GM12878 (cell line): ENCODE measurements at regions of chr2 and their contacts with region 1.

Region 1: DNA sequence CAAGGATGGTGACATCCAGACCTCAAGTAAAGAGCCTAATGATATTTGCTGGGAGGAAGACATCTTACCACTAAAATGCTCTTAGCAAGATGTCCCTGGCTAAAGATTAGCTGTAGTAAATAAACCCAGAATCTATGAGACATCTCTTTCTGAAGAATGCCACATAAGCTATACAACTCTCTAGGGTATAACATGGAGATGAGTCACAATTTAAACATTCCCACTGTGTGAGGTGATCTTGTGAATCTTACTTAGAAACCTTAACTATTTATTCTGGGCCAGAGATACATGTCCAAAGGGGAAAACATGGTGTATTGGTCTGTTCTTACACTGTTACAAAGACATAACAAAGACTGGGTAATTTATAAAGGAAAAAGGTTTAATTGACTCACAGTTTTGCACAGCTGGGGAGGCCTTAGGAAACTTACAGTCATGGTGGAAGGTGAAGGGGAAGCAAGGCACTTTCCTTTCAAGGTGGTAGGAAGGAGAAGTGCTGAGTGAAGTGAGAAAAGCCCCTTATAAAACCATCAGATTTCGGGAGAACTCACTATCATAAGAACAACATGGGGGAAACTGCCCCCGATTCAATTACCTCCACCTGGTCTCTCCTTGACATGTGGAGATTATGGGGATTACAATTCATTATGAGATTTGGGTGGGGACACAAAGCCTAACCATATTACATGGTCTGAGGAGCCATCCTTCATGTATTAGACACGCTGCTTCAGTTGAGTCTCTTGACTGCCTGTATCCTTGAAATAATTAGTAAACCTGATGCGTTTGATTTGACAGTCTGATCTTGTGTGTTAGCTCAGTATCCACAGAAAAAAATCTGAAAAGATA is 17.1 kb downstream of the KRCC1 start:
- DNase-seq: no peak
- ATAC-seq: no peak
- H3K4me3 ChIP-seq: no peak overlapping the region
- H3K27ac ChIP-seq: no peak overlapping the region
- H3K4me1 ChIP-seq: no peaks in the 10 kb centered on the region
- H3K27me3 ChIP-seq: no peaks in the 10 kb centered on the region
- CTCF ChIP-seq: no peak
- EP300 ChIP-seq: no peak
- POLR2A ChIP-seq: no peak
- RAD21 ChIP-seq: no peak

Region 2: DNA sequence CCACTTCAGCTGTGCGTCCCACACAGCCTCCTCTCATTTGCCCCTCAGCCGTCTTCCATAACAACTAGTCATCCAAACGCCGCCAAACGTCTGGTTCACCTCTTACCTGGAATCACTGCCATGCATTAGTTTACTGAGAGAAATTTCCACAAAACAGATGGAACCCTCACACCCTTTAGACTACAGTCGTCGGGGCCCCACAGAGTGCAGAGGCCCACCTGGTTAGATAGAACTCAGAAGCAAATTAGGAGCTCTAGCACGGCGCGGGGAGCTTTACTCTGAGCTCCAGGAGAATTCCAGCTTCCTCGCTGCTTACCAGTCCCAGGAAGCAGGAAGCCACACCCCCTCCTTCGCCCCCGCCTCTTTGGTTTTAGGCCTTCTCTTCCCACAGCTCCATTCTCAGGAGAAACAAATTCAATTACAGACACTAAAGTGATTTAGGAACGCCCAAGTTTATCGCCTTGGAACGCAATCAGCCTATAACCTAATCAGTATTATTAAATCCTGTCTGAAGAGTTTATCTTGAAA is 31.5 kb before region 1 on chr2:
- CTCF ChIA-PET with region 1: no interaction called
- POLR2A ChIA-PET with region 1: no interaction called
- RAD21 ChIA-PET with region 1: no interaction called
- SMC1A ChIA-PET with region 1: no interaction called
- in situ Hi-C with region 1: no loop called
- intact Hi-C with region 1: no loop called
- DNase-seq: no peak
- ATAC-seq: no peak
- H3K4me3 ChIP-seq: no peak overlapping the region
- H3K27ac ChIP-seq: no peak overlapping the region
- H3K4me1 ChIP-seq: no peaks in the 10 kb centered on the region
- H3K27me3 ChIP-seq: no peaks in the 10 kb centered on the region; a peak in 1 of 4 replicates
- CTCF ChIP-seq: no peak
- EP300 ChIP-seq: no peak
- POLR2A ChIP-seq: no peak
- RAD21 ChIP-seq: no peak

Region 3: GRCh38 chr2:88074854-88075292 is 36.4 kb after region 1 on chr2:
- CTCF ChIA-PET with region 1: no interaction called
- POLR2A ChIA-PET with region 1: no interaction called
- RAD21 ChIA-PET with region 1: no interaction called
- SMC1A ChIA-PET with region 1: no interaction called
- in situ Hi-C with region 1: no loop called
- intact Hi-C with region 1: no loop called
- DNase-seq: no peak
- ATAC-seq: no peak
- H3K4me3 ChIP-seq: no peak overlapping the region
- H3K27ac ChIP-seq: no peak overlapping the region
- H3K4me1 ChIP-seq: no peaks in the 10 kb centered on the region
- H3K27me3 ChIP-seq: no peaks in the 10 kb centered on the region
- CTCF ChIP-seq: no peak
- EP300 ChIP-seq: no peak
- POLR2A ChIP-seq: no peak
- RAD21 ChIP-seq: no peak

Region 4: GRCh38 chr2:88099798-88100488 is 61.5 kb after region 1 on chr2:
- CTCF ChIA-PET with region 1: no interaction called
- POLR2A ChIA-PET with region 1: no interaction called
- RAD21 ChIA-PET with region 1: no interaction called
- SMC1A ChIA-PET with region 1: no interaction called
- in situ Hi-C with region 1: no loop called
- intact Hi-C with region 1: loop called (anchors 10 kb)
- DNase-seq: no peak
- ATAC-seq: no peak
- H3K4me3 ChIP-seq: no peak overlapping the region
- H3K27ac ChIP-seq: no peak overlapping the region
- H3K4me1 ChIP-seq: no peaks in the 10 kb centered on the region
- H3K27me3 ChIP-seq: peaks cover 0 to 2% of the 10 kb centered on the region in 2 experiments; a peak in 1 of 4 replicates
- CTCF ChIP-seq: no peak
- EP300 ChIP-seq: no peak
- POLR2A ChIP-seq: no peak
- RAD21 ChIP-seq: no peak